HEK293T (cell line): ENCODE measurements at regions of chr14 and their contacts with region 1.

Region 1: DNA sequence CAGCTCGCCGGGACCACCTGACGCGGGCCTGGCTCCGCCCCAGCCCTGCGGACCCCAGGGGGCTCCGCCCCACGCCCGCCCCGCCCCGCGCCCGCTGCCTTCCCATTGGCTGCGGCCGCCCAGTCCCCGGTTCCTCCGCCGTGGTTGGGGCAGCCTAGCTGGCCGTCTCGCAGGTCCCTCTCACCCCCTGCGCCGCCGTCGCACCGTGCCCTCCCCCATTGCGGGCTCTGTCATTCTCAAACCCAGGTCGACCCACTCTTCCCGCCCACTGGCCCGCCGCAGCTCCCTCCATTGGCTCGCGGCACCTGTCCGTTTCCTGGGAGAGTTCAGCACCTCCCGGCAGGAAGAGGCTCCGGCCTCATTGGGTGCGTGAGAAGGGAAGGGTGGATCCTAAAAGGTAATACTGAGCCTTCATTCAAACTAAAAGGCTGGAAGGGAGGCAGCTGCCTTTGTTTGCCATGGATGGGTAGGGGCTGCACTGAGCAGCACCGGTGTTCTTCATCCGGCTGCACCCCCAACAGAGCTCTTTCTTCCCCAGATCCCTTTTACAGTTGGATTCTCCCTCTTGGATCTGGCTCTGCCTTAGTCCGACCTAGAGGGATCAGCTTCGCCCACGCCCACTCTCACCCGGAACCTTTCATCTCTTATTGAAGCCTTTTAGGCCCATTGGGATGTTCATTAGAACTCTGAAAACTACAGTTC is 381 bp upstream of the MAP3K9 start:
- DNase-seq: peak; percentile 94

Region 2: DNA sequence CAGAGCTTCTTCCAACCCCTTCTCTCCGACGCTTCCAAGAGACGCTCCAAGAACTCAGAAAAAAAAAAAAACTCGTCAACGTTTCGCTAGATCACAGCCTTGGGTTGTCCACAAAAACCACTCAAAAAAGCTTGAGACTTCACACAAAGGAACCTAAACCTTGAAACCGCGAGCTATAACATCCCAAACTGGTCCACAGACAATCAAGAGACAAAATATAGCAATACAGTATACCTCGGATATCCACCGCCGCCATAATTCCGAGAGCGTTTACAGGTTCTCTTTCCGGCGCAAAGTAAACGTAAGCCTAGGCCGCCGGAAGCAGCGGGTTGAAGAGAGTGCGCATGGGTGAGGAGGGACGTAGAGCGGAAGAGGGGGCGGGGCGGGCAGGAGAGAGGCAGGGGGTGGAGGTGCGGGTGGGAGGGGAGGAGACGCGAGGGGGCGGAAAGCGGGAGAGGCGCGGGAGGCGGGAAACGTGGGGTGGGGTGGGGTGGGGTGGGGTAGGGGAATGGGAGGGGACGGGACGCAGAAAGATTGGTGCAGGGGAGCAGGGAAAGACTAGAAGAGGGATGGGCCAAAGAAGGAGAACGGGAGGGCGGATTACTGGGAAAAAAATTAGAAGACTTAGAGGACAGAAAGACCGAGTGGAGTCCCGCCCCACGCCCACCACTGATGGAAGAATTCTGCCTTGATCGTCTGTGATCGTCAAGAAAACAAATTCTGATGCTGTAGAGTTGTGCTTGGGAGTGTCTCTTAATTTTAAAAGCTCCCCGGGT is 209.1 kb before region 1 on chr14 and contains the start of gene MED6:
- CTCF ChIA-PET with region 1: no interaction called
- POLR2A ChIA-PET with region 1: interaction called, 11 read pairs
- DNase-seq: peak; percentile 94